ENCODE measurements at regions of chr9 and their contacts with region 1.

Region 1: GRCh38 chr9:113275157-113276131 is at the starts of genes CDC26 and PRPF4:
- DNase-seq: peak; percentile 92
- H3K4me3 ChIP-seq: peak within 1 kb of the TSS; percentile 63
- H3K27me3 ChIP-seq: no peaks in the 10 kb centered on the region
- CTCF ChIP-seq: no peak
- polyA plus RNA-seq, gene CDC26: 11.1 and 33.2 TPM in 2 replicates
- polyA plus RNA-seq, gene PRPF4: 16.6 and 18.3 TPM in 2 replicates

Region 2: GRCh38 chr9:113261917-113262671 is 13.3 kb before region 1 on chr9:
- CTCF ChIA-PET with region 1: interaction called, 42 read pairs
- POLR2A ChIA-PET with region 1: interaction called, 7 read pairs
- DNase-seq: no peak
- H3K4me3 ChIP-seq: no peak overlapping the region
- H3K27me3 ChIP-seq: no peaks in the 10 kb centered on the region
- CTCF ChIP-seq: no peak

Region 3: DNA sequence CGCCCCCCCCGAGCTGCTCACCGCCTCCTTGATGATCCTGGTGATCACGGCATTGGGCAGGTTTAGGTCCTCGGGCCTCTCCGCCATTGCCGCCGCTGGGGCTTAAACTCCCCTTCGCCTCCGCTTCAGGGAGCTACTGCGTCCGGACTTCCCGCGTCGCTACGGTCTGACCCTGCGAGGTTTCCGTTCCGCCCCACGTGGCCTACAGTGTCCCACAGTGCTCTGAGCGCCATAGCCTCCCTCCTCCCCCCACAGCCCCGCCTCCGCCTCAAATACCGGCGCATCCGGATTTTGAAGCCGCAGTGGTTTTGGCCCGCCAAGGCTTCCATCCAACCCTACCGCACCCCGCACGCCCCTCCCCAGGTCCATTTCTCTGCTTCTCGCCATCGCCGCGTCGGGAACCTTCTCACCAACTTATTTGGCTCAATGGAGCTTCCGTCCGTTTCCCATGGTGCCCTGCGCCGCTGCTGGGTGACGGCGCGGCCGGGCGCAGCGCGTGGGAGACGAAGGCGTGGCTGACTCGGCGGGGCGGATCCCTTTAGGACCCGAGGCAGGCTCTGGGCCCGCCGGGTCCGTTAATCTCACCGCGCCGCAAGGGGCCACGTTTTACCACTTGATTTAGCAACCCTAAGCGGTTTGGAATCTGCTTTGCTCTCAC is 134.9 kb after region 1 on chr9 and contains the starts of genes C9orf43 and POLE3:
- CTCF ChIA-PET with region 1: interaction called, 45 read pairs
- POLR2A ChIA-PET with region 1: interaction called, 6 read pairs
- DNase-seq: peak; percentile 74
- H3K4me3 ChIP-seq: peak within 1 kb of the TSS; percentile 99
- H3K27me3 ChIP-seq: no peaks in the 10 kb centered on the region
- CTCF ChIP-seq: 0 out of 2 replicates have a peak, but pooled peaks have one; percentile 12
- polyA plus RNA-seq, gene C9orf43: 0.23 and 0.49 TPM in 2 replicates
- polyA plus RNA-seq, gene POLE3: 29.3 and 47.3 TPM in 2 replicates

Region 4: GRCh38 chr9:113454914-113455761 is 179.7 kb after region 1 on chr9:
- CTCF ChIA-PET with region 1: no interaction called
- POLR2A ChIA-PET with region 1: no interaction called
- DNase-seq: peak; percentile 59
- H3K4me3 ChIP-seq: no peak overlapping the region
- H3K27me3 ChIP-seq: no peaks in the 10 kb centered on the region
- CTCF ChIP-seq: no peak